A673 (cell line): ENCODE measurements at regions of chr6 and their contacts with region 1.

Region 1: GRCh38 chr6:49849213-49849907 is 17.0 kb downstream of the CRISP1 start:
- DNase-seq: peak; percentile 83
- H3K4me3 ChIP-seq: no peak overlapping the region
- H3K27ac ChIP-seq: no peak overlapping the region
- H3K4me1 ChIP-seq: no peaks in the 10 kb centered on the region
- H3K27me3 ChIP-seq: no peaks in the 10 kb centered on the region
- CTCF ChIP-seq: peak; percentile 62

Region 2: DNA sequence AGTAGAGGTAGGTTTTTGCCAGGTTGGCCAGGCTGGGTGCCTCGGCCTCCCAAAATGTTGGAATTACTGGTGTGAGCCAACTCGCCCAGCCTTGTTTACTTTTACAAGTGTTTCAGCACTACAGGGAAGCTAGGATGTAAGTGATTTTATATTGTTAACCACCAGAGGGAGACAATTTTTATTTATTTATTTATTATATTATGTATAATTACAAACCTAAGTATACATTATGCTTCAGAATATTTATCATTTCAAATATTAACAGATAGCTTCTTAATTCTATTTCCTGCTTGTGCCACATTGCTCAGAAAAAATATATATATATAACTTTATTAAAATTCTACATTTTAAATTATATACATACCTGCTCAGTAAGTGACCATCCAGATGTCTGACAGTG is 396.1 kb before region 1 on chr6:
- CTCF ChIA-PET with region 1: no interaction called
- POLR2A ChIA-PET with region 1: no interaction called
- intact Hi-C with region 1: loop called (anchors 5 kb)
- DNase-seq: peak; percentile 16
- H3K4me3 ChIP-seq: no peak overlapping the region
- H3K27ac ChIP-seq: no peak overlapping the region
- H3K4me1 ChIP-seq: no peaks in the 10 kb centered on the region
- H3K27me3 ChIP-seq: no peaks in the 10 kb centered on the region
- CTCF ChIP-seq: peak; percentile 48; the same call in 1 of the 2 replicates

Region 3: DNA sequence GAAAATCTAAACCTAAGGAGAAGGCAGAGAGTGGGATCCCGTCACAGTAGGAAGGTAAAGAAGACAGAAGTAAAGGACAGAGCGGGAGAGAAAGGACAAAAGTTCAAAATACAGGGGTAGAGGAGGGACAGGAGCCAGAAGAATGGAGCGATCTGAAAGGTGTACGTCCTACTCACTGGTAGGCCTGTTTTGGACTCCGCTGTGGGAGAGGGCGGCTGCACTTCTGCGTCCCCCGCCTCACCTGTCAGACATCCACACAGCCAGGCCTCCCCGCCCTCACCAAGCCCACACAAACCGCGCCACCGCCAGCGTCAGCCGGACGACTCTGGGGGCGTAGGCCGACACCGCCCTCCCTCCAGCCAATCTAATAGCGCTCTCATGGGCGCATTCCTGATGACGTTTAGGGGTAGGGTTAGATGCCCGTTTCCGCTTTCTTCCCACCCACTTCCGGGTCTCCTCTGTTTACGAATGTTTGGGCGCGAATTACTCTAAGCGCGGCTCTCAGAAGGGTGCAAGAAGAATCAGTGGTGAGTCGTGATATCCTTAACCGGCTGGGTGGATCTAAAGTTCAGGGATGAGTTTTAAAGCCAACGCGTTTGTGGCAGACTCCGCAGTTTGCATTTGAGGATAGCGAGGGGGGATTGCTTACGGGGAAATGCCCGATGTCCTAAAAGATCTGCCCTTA is 386.3 kb before region 1 on chr6 and contains the starts of genes CENPQ and MMUT:
- CTCF ChIA-PET with region 1: no interaction called
- POLR2A ChIA-PET with region 1: no interaction called
- intact Hi-C with region 1: loop called (anchors 5 kb)
- DNase-seq: peak; percentile 97
- H3K4me3 ChIP-seq: peak within 1 kb of the TSS; percentile 66
- H3K27ac ChIP-seq: peak within 1 kb of the TSS; percentile 92
- H3K4me1 ChIP-seq: peaks cover 8% of the 10 kb centered on the region
- H3K27me3 ChIP-seq: no peaks in the 10 kb centered on the region
- CTCF ChIP-seq: no peak
- total RNA-seq, gene CENPQ: 10.7 and 11.7 TPM in 2 replicates
- total RNA-seq, gene MMUT: 20.5 and 22.7 TPM in 2 replicates

Region 4: GRCh38 chr6:49625140-49625539 is 224.2 kb before region 1 on chr6:
- CTCF ChIA-PET with region 1: interaction called, 9 read pairs
- POLR2A ChIA-PET with region 1: no interaction called
- intact Hi-C with region 1: loop called (anchors 1 kb)
- DNase-seq: no peak
- H3K4me3 ChIP-seq: no peak overlapping the region
- H3K27ac ChIP-seq: no peak overlapping the region
- H3K4me1 ChIP-seq: no peaks in the 10 kb centered on the region
- H3K27me3 ChIP-seq: no peaks in the 10 kb centered on the region
- CTCF ChIP-seq: no peak

Region 5: DNA sequence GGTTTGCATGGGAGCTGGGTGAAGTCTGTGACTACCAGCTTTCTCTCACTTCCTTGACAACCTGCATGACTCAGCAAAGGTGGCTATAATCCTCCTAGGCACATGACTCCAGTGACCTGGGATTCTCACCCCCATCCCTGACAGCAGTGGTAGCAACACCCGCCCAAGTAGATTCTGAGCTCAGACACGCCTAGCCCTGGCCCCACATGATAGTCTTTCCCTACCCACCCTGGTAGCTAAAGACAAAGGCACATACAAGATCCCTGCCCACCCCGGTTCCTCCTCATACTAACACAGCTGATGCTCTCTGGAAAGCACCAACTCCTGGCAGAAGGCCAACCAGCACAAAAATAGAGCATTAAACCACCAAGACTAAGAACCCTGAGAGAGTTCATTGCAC is 42.9 kb after region 1 on chr6:
- CTCF ChIA-PET with region 1: no interaction called
- POLR2A ChIA-PET with region 1: no interaction called
- intact Hi-C with region 1: no loop called
- DNase-seq: no peak
- H3K4me3 ChIP-seq: no peak overlapping the region
- H3K27ac ChIP-seq: no peak overlapping the region
- H3K4me1 ChIP-seq: no peaks in the 10 kb centered on the region
- H3K27me3 ChIP-seq: no peaks in the 10 kb centered on the region
- CTCF ChIP-seq: no peak